ENCODE measurements at regions of chr7 and their contacts with region 1.

Region 1: GRCh38 chr7:128176696-128177095 is 64.4 kb upstream of the LEP start:
- DNase-seq: no peak
- ATAC-seq: no peak
- H3K4me3 ChIP-seq: no peak overlapping the region
- H3K27ac ChIP-seq: no peak overlapping the region
- H3K4me1 ChIP-seq: no peaks in the 10 kb centered on the region
- H3K27me3 ChIP-seq: peaks cover 74% of the 10 kb centered on the region
- CTCF ChIP-seq: no peak
- POLR2A ChIP-seq: no peak
- RAD21 ChIP-seq: no peak

Region 2: GRCh38 chr7:128141683-128142195 is 35.0 kb before region 1 on chr7:
- CTCF ChIA-PET with region 1: interaction called, 3 read pairs
- POLR2A ChIA-PET with region 1: no interaction called
- dilution Hi-C with region 1: no loop called
- in situ Hi-C with region 1: no loop called
- intact Hi-C with region 1: loop called (anchors 2 kb)
- DNase-seq: no peak
- ATAC-seq: no peak
- H3K4me3 ChIP-seq: no peak overlapping the region
- H3K27ac ChIP-seq: no peak overlapping the region
- H3K4me1 ChIP-seq: no peaks in the 10 kb centered on the region
- H3K27me3 ChIP-seq: peaks cover 31% of the 10 kb centered on the region
- CTCF ChIP-seq: no peak
- POLR2A ChIP-seq: no peak
- RAD21 ChIP-seq: no peak